Activated CD4-positive, alpha-beta T cell treated with anti-CD3 and anti-CD28 coated beads, Interleukin-2, amount 10 ng/mL, durations not matched to agents 24 days and 14 days (primary cell): ENCODE measurements at regions of chr20 and their contacts with region 1.

Region 1: DNA sequence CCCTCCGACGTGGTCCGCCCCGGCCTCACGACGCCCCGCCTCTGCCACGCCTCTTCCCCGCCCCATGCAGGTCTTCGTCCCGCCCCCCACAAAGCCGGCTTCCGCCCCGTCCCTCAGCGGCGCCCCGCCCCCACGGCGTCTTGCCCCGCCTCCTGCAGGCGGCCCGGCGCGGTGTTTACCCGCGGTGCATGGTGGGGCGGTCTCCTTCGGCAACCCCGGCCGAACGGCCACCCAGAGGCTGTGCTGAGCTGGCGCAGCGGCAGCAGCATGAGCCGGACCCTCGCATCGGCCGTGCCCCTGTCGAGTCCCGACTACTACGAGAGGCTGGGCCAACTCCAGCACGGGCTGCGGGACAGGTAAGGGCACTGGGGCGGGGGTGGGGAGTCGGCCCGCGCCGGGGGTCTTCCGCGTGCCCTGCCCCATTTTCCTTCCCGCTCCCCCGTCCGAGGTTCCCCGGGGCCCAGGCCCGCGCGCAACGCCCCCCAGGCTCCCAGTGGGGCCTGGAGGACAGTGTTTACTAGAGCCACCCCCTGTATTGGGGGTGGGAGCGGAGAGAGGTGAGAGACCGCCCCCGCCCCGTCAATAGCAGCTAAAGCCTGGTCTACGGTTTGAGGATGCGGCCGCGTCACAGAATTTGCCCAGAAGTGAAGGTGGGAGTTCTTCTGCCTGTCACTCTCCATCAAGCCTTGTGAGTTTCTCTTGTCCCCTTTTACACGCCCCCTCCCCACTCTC is at the start of gene KIZ:
- DNase-seq: peak; percentile 99
- H3K4me3 Mint-ChIP-seq: peak within 1 kb of the TSS; percentile 91
- H3K27ac Mint-ChIP-seq: peak within 1 kb of the TSS; percentile 88
- H3K4me1 Mint-ChIP-seq: peaks cover 16% of the 10 kb centered on the region
- H3K27me3 Mint-ChIP-seq: peaks cover 2% of the 10 kb centered on the region
- total RNA-seq, gene KIZ: 7.5 and 9.3 TPM in 2 replicates

Region 2: DNA sequence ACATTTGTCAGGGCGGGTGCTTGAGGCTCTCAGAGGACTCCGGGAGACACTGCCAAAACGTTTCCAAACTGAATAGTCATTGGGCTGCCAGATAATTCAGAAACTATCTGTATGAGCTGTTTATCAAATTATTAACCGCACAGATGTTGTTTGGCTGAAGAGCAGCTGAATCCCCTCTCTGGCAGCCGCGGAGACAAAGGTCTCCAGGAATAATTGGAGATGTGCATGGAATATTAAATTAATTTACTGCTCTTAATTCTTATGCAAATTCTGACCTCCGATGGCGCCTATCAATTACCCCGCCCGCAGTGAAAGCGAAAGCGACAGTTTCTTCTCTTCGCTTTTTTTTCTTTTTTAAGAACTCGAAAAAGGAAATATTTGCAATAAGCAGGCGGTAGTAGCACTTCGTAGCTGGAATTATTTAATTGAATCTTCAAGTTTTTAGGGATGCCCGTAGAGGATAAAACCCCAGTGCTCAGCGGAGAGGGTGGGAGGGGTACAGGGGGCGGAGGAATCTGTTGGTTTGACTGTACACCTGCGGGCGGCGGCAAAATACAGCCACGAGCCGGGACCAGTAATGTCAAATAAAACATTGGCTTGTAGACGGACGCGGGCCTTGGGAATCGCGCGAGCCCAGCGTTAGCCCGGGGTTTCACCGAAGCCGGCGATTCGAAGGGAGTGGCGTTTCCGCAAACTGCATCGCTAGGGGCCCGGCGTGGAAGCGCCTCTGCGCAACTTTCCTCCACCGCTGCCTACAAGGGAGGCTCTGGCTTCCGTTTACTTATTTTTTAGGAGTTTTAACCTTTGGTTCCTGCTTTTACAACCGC is 26.1 kb before region 1 on chr20:
- intact Hi-C with region 1: loop called (anchors 2 kb)
- DNase-seq: peak; percentile 87
- H3K4me3 Mint-ChIP-seq: peak overlapping the region; percentile 89
- H3K27ac Mint-ChIP-seq: peak overlapping the region; percentile 92
- H3K4me1 Mint-ChIP-seq: peaks cover 36% of the 10 kb centered on the region
- H3K27me3 Mint-ChIP-seq: peaks cover 79% of the 10 kb centered on the region